ENCODE measurements at regions of chr21 and their contacts with region 1.

Region 1: GRCh38 chr21:36104317-36105300 is 30.3 kb upstream of the CBR3 start:
- DNase-seq: peak; percentile 51 to 96 (median 78)

Region 2: GRCh38 chr21:36060159-36060921 is 44.3 kb before region 1 on chr21 and contains the start of gene SETD4:
- intact Hi-C with region 1: loop called (anchors 5 kb)
- DNase-seq: peak; percentile 91 to 99 (median 94)

Region 3: DNA sequence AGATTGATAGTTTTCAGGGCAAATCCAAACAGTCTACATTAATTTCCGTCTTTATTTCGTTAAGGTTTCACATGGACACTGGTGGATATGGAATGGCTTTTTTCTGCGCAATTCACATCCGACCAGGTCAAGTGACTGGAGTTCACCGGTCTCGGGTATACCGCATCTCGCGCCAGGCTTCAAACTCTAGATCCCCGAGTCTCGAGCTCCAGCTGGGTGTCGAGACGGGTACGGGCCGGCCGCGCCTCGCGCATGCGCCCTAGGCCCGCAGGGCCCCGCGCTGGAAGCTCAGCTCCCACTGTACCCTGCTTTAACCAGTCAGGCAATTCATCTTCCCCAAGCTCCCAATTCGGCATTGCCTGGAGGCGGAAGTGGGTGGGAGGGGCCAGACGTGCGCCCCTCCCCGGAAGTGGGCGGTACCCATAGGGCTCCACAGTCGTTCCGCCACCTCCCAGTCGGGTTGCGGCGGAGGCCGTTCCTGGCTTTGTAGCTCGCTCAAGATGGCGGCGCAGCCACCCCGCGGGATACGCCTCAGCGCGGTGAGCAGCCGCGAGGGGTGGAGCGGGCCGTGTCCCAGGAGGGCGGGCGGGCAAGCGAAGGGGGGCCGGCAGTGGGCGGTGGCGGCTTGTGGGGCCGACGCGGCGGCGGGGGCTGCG is 215.3 kb after region 1 on chr21 and contains the start of gene MORC3:
- intact Hi-C with region 1: no loop called
- DNase-seq: peak; percentile 95 to 100 (median 98)

Region 4: GRCh38 chr21:36532769-36533455 is 428.3 kb after region 1 on chr21:
- intact Hi-C with region 1: no loop called
- DNase-seq: no peak